IMR-90 (cell line): ENCODE measurements at regions of chr11 and their contacts with region 1.

Region 1: GRCh38 chr11:14907411-14908213 is 15.6 kb upstream of the CYP2R1 start:
- DNase-seq: peak; percentile 21
- ATAC-seq: peak; percentile 77
- H3K4me3 ChIP-seq: no peak overlapping the region
- H3K27ac ChIP-seq: no peak overlapping the region
- H3K4me1 ChIP-seq: no peaks in the 10 kb centered on the region
- H3K27me3 ChIP-seq: peaks cover 1% of the 10 kb centered on the region
- CTCF ChIP-seq: peak; percentile 58
- POLR2A ChIP-seq: no peak
- RAD21 ChIP-seq: peak; percentile 52

Region 2: GRCh38 chr11:14519917-14520746 is 387.5 kb before region 1 on chr11 and contains the start of gene PSMA1:
- CTCF ChIA-PET with region 1: no interaction called
- POLR2A ChIA-PET with region 1: no interaction called
- dilution Hi-C with region 1: no loop called
- in situ Hi-C with region 1: no loop called
- intact Hi-C with region 1: loop called (anchors 5 kb)
- DNase-seq: peak; percentile 94
- ATAC-seq: peak; percentile 98
- H3K4me3 ChIP-seq: peak within 1 kb of the TSS; percentile 81
- H3K27ac ChIP-seq: peak within 1 kb of the TSS; percentile 95
- H3K4me1 ChIP-seq: no peaks in the 10 kb centered on the region; the same call in 1 of the 2 replicates
- H3K27me3 ChIP-seq: no peaks in the 10 kb centered on the region
- CTCF ChIP-seq: no peak
- POLR2A ChIP-seq: peak; percentile 91
- RAD21 ChIP-seq: no peak
- total RNA-seq, gene PSMA1: 194 and 219 TPM in 2 replicates

Region 3: DNA sequence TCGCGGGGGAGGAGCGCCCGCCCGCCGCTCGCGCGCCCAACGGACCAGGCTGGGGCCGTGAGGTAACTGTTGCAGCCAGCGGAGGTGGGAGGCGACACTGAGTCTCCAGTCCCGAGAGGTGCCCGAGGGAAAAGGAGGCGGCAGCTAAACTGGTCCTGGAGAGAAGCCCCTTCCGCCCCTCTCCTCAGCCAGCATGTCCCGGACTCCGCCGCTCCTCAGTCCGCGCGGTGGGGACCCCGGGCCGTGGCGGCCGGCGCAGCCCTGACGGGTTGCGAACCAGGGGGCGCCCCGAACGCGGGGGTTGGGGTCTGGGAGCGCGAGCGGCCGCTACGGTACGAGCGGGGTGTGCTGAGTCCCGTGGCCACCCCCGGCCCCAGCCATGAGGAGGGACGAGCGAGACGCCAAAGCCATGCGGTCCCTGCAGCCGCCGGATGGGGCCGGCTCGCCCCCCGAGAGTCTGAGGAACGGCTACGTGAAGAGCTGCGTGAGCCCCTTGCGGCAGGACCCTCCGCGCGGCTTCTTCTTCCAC is 263.9 kb before region 1 on chr11 and contains the start of gene PDE3B:
- CTCF ChIA-PET with region 1: no interaction called
- POLR2A ChIA-PET with region 1: no interaction called
- dilution Hi-C with region 1: no loop called
- in situ Hi-C with region 1: no loop called
- intact Hi-C with region 1: loop called (anchors 10 kb)
- DNase-seq: peak; percentile 27
- ATAC-seq: peak; percentile 83
- H3K4me3 ChIP-seq: peak within 1 kb of the TSS; percentile 56
- H3K27ac ChIP-seq: peak within 1 kb of the TSS; percentile 67; the same call in 1 of the 2 replicates
- H3K4me1 ChIP-seq: no peaks in the 10 kb centered on the region
- H3K27me3 ChIP-seq: no peaks in the 10 kb centered on the region; the same call in 1 of the 2 replicates
- CTCF ChIP-seq: no peak
- POLR2A ChIP-seq: no peak
- RAD21 ChIP-seq: no peak
- total RNA-seq, gene PDE3B: 1.1 and 1.3 TPM in 2 replicates

Region 4: DNA sequence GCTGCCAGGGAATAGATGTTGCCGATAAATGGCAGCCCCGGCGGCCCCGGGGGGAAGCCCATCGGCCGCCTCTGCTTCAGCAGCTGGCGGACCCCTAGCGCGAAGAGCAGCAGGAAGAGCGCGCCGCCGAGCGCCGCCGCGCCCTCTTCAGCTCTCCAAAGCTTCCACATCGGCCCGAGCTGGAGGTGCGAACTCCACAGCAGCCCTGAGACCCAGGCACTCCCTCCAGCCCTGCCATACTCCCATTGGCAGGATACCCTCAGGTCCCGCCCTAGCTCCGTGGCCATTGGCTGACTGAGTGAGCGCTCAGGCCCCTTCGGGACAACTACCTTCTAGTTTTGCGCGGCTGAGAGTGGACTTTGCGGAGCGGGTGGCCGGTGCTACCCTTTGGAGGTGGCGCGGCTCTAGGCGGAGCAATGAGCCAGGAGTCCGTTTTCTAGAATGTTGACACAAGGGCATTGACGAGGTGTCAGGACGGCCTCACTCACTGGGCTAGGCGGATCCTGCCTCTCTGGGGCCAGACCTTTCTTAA is 15.5 kb before region 1 on chr11 and contains the start of gene CYP2R1:
- CTCF ChIA-PET with region 1: interaction called, 11 read pairs
- POLR2A ChIA-PET with region 1: no interaction called
- dilution Hi-C with region 1: no loop called
- in situ Hi-C with region 1: no loop called
- intact Hi-C with region 1: no loop called
- DNase-seq: peak; percentile 95
- ATAC-seq: peak; percentile 98
- H3K4me3 ChIP-seq: peak within 1 kb of the TSS; percentile 77
- H3K27ac ChIP-seq: peak within 1 kb of the TSS; percentile 6
- H3K4me1 ChIP-seq: peaks cover 3% of the 10 kb centered on the region; the same call in 1 of the 2 replicates
- H3K27me3 ChIP-seq: no peaks in the 10 kb centered on the region; the same call in none of the 2 replicates
- CTCF ChIP-seq: no peak
- POLR2A ChIP-seq: no peak
- RAD21 ChIP-seq: no peak
- total RNA-seq, gene CYP2R1: 5.2 and 5.6 TPM in 2 replicates

Region 5: GRCh38 chr11:15101072-15101709 is 193.6 kb after region 1 on chr11:
- CTCF ChIA-PET with region 1: interaction called, 3 read pairs
- POLR2A ChIA-PET with region 1: no interaction called
- dilution Hi-C with region 1: no loop called
- in situ Hi-C with region 1: no loop called
- intact Hi-C with region 1: loop called (anchors 1 kb)
- DNase-seq: peak; percentile 73
- ATAC-seq: peak; percentile 95
- H3K4me3 ChIP-seq: no peak overlapping the region
- H3K27ac ChIP-seq: no peak overlapping the region
- H3K4me1 ChIP-seq: peaks cover 10% of the 10 kb centered on the region; the same call in 1 of the 2 replicates
- H3K27me3 ChIP-seq: no peaks in the 10 kb centered on the region; the same call in 1 of the 2 replicates
- CTCF ChIP-seq: peak; percentile 97
- POLR2A ChIP-seq: no peak
- RAD21 ChIP-seq: peak; percentile 99